ENCODE measurements at regions of chr11 and their contacts with region 1.

Region 1: GRCh38 chr11:66718320-66719036 is 10.5 kb downstream of the SPTBN2 start:
- DNase-seq: no peak
- H3K4me3 ChIP-seq: no peak overlapping the region
- H3K4me3 Mint-ChIP-seq: peak overlapping the region in 1 of 2 donors; percentile 69
- H3K27ac ChIP-seq: no peak overlapping the region
- H3K27ac Mint-ChIP-seq: no peak overlapping the region
- H3K4me1 ChIP-seq: no peaks in the 10 kb centered on the region
- H3K4me1 Mint-ChIP-seq: peaks cover 12% of the 10 kb centered on the region
- H3K27me3 ChIP-seq: peaks cover 0 to 9% of the 10 kb centered on the region in 2 donors
- H3K27me3 Mint-ChIP-seq: peaks cover 6 to 17% (median 15%) of the 10 kb centered on the region in 3 donors
- CTCF ChIP-seq: no peak

Region 2: GRCh38 chr11:66626926-66627325 is 91.6 kb before region 1 on chr11:
- intact Hi-C with region 1: no loop called
- DNase-seq: no peak
- H3K4me3 ChIP-seq: no peak overlapping the region
- H3K4me3 Mint-ChIP-seq: no peak overlapping the region
- H3K27ac ChIP-seq: peak overlapping the region in 1 of 2 donors; percentile 2
- H3K27ac Mint-ChIP-seq: peak overlapping the region in 3 of 7 donors; percentile 2 to 71 (median 30)
- H3K4me1 ChIP-seq: no peaks in the 10 kb centered on the region
- H3K4me1 Mint-ChIP-seq: peaks cover 4% of the 10 kb centered on the region
- H3K27me3 ChIP-seq: no peaks in the 10 kb centered on the region
- H3K27me3 Mint-ChIP-seq: peaks cover 0 to 2% (median 0%) of the 10 kb centered on the region in 3 donors
- CTCF ChIP-seq: no peak

Region 3: GRCh38 chr11:66815646-66816045 is 97.2 kb after region 1 on chr11:
- intact Hi-C with region 1: loop called in 1 of 2 experiments (anchors 5 kb)
- DNase-seq: no peak
- H3K4me3 ChIP-seq: no peak overlapping the region
- H3K4me3 Mint-ChIP-seq: no peak overlapping the region
- H3K27ac ChIP-seq: no peak overlapping the region
- H3K27ac Mint-ChIP-seq: no peak overlapping the region
- H3K4me1 ChIP-seq: no peaks in the 10 kb centered on the region
- H3K4me1 Mint-ChIP-seq: no peaks in the 10 kb centered on the region
- H3K27me3 ChIP-seq: no peaks in the 10 kb centered on the region
- H3K27me3 Mint-ChIP-seq: peaks cover 1 to 2% (median 1%) of the 10 kb centered on the region in 3 donors
- CTCF ChIP-seq: no peak